ENCODE measurements at regions of chr21 and their contacts with region 1.

Region 1: DNA sequence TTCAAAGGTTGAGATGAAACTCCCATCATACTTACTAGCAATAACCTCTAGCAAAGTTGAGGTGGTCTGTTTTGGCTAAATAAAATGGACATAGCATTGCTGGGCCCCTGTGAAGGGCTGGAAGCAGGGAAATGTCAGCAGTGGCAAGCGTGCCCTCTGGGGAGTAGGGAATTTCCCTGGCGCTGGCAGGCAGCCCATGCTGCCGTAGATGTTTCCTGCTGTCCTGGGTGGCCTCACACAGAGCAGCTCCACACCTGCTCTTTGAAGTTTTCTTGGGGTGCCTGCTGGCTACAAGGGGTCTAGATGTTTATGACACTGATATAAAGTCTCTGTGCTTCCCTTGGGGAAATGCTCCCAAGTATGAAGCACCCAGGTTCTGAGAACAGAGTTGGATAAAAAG is 30.2 kb downstream of the ADARB1 start:
- DNase-seq: no peak
- H3K4me3 ChIP-seq: no peak overlapping the region
- H3K27ac ChIP-seq: no peak overlapping the region
- H3K4me1 ChIP-seq: peaks cover 56% of the 10 kb centered on the region
- CTCF ChIP-seq: no peak

Region 2: GRCh38 chr21:44093761-44094160 is 1010.8 kb before region 1 on chr21:
- CTCF ChIA-PET with region 1: no interaction called
- POLR2A ChIA-PET with region 1: no interaction called
- intact Hi-C with region 1: no loop called
- DNase-seq: no peak
- H3K4me3 ChIP-seq: no peak overlapping the region
- H3K27ac ChIP-seq: no peak overlapping the region
- H3K4me1 ChIP-seq: peaks cover 26% of the 10 kb centered on the region
- CTCF ChIP-seq: no peak

Region 3: GRCh38 chr21:45116066-45116465 is 11.5 kb after region 1 on chr21:
- CTCF ChIA-PET with region 1: interaction called, 3 read pairs
- POLR2A ChIA-PET with region 1: interaction called, 116 read pairs
- intact Hi-C with region 1: no loop called
- DNase-seq: no peak
- H3K4me3 ChIP-seq: no peak overlapping the region
- H3K27ac ChIP-seq: no peak overlapping the region
- H3K4me1 ChIP-seq: peaks cover 22% of the 10 kb centered on the region
- CTCF ChIP-seq: no peak

Region 4: DNA sequence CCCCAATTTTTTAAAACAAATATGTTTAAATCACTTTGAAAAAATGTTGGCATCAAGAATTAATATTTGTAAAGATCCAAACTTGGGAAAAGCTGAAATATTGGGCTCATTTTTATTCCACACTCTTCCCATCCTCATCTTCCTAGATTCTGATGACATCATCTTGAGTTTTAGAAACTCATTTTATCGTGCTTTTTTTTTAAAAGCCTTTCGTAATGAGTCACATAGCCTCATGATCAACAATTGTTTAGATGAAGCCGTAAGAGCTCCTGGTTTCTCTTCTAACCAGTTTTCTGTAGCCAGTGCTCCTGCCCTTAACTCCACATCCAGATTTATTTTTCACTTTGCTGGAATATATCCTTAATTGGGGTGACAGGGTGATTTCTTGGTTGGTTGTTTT is 104.5 kb after region 1 on chr21:
- CTCF ChIA-PET with region 1: no interaction called
- POLR2A ChIA-PET with region 1: no interaction called
- intact Hi-C with region 1: no loop called
- DNase-seq: no peak
- H3K4me3 ChIP-seq: no peak overlapping the region
- H3K27ac ChIP-seq: no peak overlapping the region
- H3K4me1 ChIP-seq: no peaks in the 10 kb centered on the region
- CTCF ChIP-seq: no peak